ENCODE measurements at regions of chr20 and their contacts with region 1.

Region 1: DNA sequence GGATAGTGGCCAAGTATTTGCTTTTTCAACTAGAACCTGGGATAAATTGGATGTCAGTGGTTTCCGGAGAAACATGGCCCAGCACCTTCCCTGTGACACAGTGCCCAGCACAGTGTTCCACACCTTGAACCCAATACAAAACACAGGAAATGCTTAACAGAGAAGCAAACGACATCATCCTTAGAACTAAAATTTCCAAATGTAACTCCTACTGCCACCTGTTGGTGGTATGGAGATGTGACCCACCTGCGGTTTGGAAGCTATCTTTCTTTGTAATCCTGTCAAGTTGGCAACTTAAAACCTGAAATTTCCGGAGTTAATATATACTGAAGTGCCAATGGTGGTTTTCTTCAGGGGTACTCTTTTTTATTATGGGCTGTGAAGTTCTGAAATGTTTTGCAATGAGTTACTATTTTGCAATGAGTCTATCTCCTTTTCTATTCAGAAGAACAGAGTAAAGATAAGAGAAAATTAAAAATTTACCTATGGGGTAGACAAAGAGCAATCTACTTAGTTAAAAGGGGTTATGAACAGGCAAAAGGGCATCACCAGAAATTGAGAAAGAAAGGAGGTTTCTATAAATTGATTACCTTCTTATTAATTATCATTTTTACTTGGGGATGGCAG is 658.8 kb downstream of the PTPRT start:
- DNase-seq: peak; percentile 54
- H3K4me3 ChIP-seq: no peak overlapping the region
- H3K27ac ChIP-seq: no peak overlapping the region
- H3K4me1 ChIP-seq: peaks cover 0 to 3% of the 10 kb centered on the region in 2 experiments; a peak in 1 of 4 replicates
- H3K27me3 ChIP-seq: no peaks in the 10 kb centered on the region
- CTCF ChIP-seq: peak; percentile 24
- EP300 ChIP-seq: no peak
- RAD21 ChIP-seq: peak; percentile 78

Region 2: DNA sequence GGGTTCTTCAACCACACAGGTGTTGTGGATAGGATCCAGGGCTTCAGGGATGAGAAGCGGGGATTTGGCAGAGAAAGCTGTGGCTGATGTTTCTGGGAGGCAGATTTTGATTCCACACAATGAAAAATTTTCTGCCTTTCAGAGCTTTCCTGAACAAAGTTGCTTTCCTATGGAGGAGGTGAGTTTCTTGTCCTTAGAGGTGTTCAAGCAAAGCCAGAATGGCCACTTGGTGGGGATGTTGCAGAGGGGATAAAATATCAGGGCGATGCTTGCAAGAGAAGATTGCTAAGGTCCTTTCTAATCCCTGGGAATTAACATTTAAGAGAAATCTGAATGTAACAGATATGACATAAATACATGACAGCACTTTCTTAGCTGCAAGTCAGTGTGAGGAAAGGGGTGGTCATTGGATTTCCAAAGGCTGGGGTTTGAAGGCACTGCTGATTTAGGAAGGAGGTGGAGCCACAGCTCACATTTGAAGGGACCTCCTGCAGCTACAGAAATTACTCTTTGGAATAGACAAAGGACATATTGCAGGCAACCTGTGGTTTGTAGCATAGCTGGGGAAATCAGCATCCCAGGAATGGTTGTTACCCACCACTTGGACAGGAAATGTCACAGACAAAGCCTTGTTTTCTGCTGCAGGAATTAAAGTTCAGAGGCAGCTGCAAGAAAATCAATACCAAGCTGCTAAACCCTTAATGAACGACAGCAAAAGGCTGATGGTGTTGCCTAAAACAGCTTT is 641.6 kb before region 1 on chr20:
- CTCF ChIA-PET with region 1: interaction called, 16 read pairs
- POLR2A ChIA-PET with region 1: no interaction called
- DNase-seq: peak; percentile 47
- H3K4me3 ChIP-seq: no peak overlapping the region
- H3K27ac ChIP-seq: no peak overlapping the region
- H3K4me1 ChIP-seq: no peaks in the 10 kb centered on the region
- H3K27me3 ChIP-seq: no peaks in the 10 kb centered on the region
- CTCF ChIP-seq: no peak
- EP300 ChIP-seq: no peak
- RAD21 ChIP-seq: peak; percentile 77

Region 3: DNA sequence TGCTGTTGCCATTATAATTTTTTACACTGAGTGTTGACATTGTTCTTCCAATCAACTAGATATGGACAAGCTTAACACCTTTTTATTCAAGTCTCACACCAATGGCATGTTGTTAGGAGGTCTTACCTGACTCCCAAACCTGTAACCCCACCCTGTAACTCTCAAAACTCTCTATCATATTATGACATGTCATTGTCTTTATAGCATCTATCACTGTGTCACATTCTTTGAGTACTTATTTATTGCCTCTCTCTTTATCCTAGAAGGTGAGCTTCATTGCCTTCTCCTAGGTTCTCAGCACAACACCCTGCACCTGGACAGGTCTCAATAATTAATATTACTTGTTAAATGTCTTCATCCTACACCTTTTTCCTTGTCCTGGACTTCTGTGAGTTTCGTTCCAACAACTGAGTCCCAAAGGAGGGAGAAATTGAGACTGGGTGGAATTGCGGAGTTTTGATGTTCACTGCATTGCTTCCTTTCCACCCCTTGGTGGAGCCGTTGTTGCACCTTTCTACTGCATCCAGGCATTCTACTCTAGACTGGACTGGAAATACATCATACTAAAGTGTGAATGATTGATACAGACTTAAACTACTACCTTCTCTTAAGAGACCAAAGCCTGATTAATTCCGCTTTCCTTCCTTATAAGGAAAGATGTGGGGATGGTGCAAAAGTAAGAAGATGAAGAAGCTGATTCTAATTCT is 574.8 kb before region 1 on chr20:
- CTCF ChIA-PET with region 1: interaction called, 15 read pairs
- POLR2A ChIA-PET with region 1: no interaction called
- DNase-seq: peak; percentile 31
- H3K4me3 ChIP-seq: peak overlapping the region in 1 of 2 experiments; percentile 51; a peak in 1 of 4 replicates
- H3K27ac ChIP-seq: no peak overlapping the region
- H3K4me1 ChIP-seq: peaks cover 0 to 2% of the 10 kb centered on the region in 2 experiments; a peak in 1 of 4 replicates
- H3K27me3 ChIP-seq: no peaks in the 10 kb centered on the region
- CTCF ChIP-seq: peak; percentile 13; the same call in 1 of the 2 replicates
- EP300 ChIP-seq: no peak
- RAD21 ChIP-seq: peak; percentile 87

Region 4: GRCh38 chr20:42027746-42028268 is 503.1 kb before region 1 on chr20:
- CTCF ChIA-PET with region 1: interaction called, 11 read pairs
- POLR2A ChIA-PET with region 1: no interaction called
- DNase-seq: peak; percentile 38
- H3K4me3 ChIP-seq: no peak overlapping the region
- H3K27ac ChIP-seq: no peak overlapping the region
- H3K4me1 ChIP-seq: no peaks in the 10 kb centered on the region; a peak in 1 of 4 replicates
- H3K27me3 ChIP-seq: no peaks in the 10 kb centered on the region
- CTCF ChIP-seq: no peak
- EP300 ChIP-seq: no peak
- RAD21 ChIP-seq: peak; percentile 80

Region 5: DNA sequence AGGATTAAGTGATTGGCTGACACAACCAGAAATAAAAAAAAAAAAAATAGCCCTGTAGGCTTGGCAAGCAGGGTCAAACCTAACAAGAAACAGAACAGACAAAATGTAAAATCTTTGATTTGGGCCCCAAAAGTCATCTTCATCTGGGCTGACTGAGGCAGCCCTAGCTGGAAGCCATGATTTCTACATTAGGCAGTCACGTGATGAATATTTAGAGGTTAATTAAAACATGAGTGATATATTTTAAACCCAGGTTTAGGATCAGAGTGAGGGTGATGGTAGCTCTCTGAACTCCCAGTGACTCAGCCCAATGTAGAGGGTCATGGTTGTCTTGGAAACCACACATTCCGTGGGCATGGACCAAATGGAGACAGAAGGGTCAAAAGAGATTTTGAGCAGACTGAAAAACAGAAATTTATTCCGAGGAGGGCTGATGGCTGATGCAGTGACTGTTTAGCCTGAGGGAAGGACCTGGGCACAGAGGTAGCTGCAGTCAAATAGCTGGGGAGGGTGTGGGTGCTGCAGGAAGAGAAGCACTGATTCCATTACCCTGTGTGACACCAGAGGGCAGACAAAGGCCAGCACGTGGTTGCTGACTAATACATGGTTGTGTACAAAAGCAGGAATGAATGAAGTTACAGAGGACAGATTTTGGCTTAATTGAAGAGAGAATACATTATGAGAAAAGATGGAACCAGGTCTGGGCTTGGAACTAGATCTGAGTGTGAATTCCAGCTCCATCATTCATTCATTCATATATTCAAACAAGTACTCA is 339.6 kb before region 1 on chr20:
- CTCF ChIA-PET with region 1: interaction called, 11 read pairs
- POLR2A ChIA-PET with region 1: no interaction called
- DNase-seq: no peak
- H3K4me3 ChIP-seq: no peak overlapping the region
- H3K27ac ChIP-seq: no peak overlapping the region
- H3K4me1 ChIP-seq: peaks cover 0 to 8% of the 10 kb centered on the region in 2 experiments; a peak in 1 of 4 replicates
- H3K27me3 ChIP-seq: no peaks in the 10 kb centered on the region
- CTCF ChIP-seq: no peak
- EP300 ChIP-seq: no peak
- RAD21 ChIP-seq: peak; percentile 41

Region 6: GRCh38 chr20:42204203-42204942 is 326.6 kb before region 1 on chr20:
- CTCF ChIA-PET with region 1: interaction called, 12 read pairs
- POLR2A ChIA-PET with region 1: no interaction called
- DNase-seq: peak; percentile 21
- H3K4me3 ChIP-seq: no peak overlapping the region
- H3K27ac ChIP-seq: no peak overlapping the region
- H3K4me1 ChIP-seq: no peaks in the 10 kb centered on the region
- H3K27me3 ChIP-seq: no peaks in the 10 kb centered on the region
- CTCF ChIP-seq: no peak
- EP300 ChIP-seq: no peak
- RAD21 ChIP-seq: peak; percentile 70

Region 7: GRCh38 chr20:42276718-42277602 is 254.0 kb before region 1 on chr20:
- CTCF ChIA-PET with region 1: no interaction called
- POLR2A ChIA-PET with region 1: no interaction called
- DNase-seq: peak; percentile 31
- H3K4me3 ChIP-seq: no peak overlapping the region
- H3K27ac ChIP-seq: no peak overlapping the region
- H3K4me1 ChIP-seq: no peaks in the 10 kb centered on the region
- H3K27me3 ChIP-seq: no peaks in the 10 kb centered on the region
- CTCF ChIP-seq: no peak
- EP300 ChIP-seq: no peak
- RAD21 ChIP-seq: peak; percentile 34

Region 8: GRCh38 chr20:42429761-42430458 is 101.0 kb before region 1 on chr20:
- CTCF ChIA-PET with region 1: no interaction called
- POLR2A ChIA-PET with region 1: no interaction called
- DNase-seq: no peak
- H3K4me3 ChIP-seq: no peak overlapping the region
- H3K27ac ChIP-seq: no peak overlapping the region
- H3K4me1 ChIP-seq: no peaks in the 10 kb centered on the region
- H3K27me3 ChIP-seq: no peaks in the 10 kb centered on the region
- CTCF ChIP-seq: no peak
- EP300 ChIP-seq: no peak
- RAD21 ChIP-seq: no peak

Region 9: GRCh38 chr20:42544926-42545325 is 14.0 kb after region 1 on chr20:
- CTCF ChIA-PET with region 1: interaction called, 14 read pairs
- POLR2A ChIA-PET with region 1: no interaction called
- DNase-seq: no peak
- H3K4me3 ChIP-seq: no peak overlapping the region
- H3K27ac ChIP-seq: no peak overlapping the region
- H3K4me1 ChIP-seq: no peaks in the 10 kb centered on the region
- H3K27me3 ChIP-seq: no peaks in the 10 kb centered on the region
- CTCF ChIP-seq: no peak
- EP300 ChIP-seq: no peak
- RAD21 ChIP-seq: no peak

Measured in SK-N-SH (cell line).